ENCODE measurements at regions of chr6 and their contacts with region 1.

Region 1: GRCh38 chr6:13814176-13814937 is at the start of gene MCUR1:
- DNase-seq: peak; percentile 69 to 91 (median 82)
- H3K4me3 ChIP-seq: peak within 1 kb of the TSS; percentile 66 to 99 (median 92)
- H3K27ac ChIP-seq: peak within 1 kb of the TSS; percentile 60 to 99 (median 97)
- H3K27me3 ChIP-seq: no peaks in the 10 kb centered on the region
- CTCF ChIP-seq: peak in 53 of 56 donors; percentile 29 to 77 (median 52)
- total RNA-seq, gene MCUR1: 22.6 to 50.0 (median 35.4) TPM

Region 2: DNA sequence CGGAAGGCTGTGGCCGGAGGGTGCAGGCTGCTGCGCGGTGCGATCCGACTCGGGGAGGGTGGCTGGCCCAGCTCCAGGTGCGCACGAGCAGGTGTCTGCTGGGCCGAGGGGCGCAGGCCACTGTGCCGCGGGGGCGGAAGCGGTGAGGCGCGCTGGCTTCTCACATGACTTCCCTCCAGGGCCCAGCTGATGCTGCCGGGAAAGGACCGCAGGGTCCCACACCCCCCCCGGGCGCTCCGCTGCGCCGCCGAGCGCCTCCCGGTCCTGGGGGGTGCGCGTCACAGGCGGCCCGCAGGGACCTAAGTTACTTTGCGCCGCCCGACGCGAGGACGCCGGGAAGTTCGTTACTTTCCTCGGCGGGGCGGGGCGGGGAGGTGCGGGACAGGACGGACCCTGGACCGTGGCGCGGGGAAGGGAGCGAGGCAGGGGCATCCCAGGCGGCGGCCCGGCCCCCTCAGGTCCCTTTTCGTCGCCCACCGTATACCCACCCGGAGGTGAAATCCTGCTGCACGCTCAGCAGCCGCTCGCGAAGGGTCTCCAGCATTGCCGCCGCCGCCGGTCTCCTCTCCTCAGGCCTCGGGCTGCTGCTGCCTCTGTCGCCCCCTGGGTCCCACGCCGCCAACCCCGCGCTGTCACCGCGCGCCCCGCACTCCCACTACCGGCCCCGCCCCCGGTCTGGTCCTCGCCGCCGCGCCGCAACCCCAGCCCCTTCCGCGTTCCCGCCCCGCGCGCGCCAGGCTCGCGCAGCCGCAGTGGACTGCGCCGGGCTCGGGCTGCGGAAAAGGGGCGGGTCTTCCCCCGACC is 1848.2 kb after region 1 on chr6 and contains the start of gene DTNBP1:
- intact Hi-C with region 1: loop called in 1 of 2 experiments (anchors 5 kb)
- DNase-seq: peak; percentile 57 to 95 (median 75)
- H3K4me3 ChIP-seq: peak within 1 kb of the TSS; percentile 57 to 99 (median 93)
- H3K27ac ChIP-seq: peak within 1 kb of the TSS in 57 of 59 donors; percentile 23 to 92 (median 80)
- H3K27me3 ChIP-seq: no peaks in the 10 kb centered on the region
- CTCF ChIP-seq: peak in 16 of 56 donors; percentile 7 to 45 (median 23)
- total RNA-seq, gene DTNBP1: 21.4 to 50.2 (median 35.4) TPM